ENCODE measurements at regions of chr5 and their contacts with region 1.

Region 1: GRCh38 chr5:82356808-82357671 is 78.9 kb upstream of the RPS23 start:
- DNase-seq: peak; percentile 93
- H3K4me3 Mint-ChIP-seq: peak overlapping the region; percentile 81
- H3K27ac Mint-ChIP-seq: peak overlapping the region; percentile 98
- H3K4me1 Mint-ChIP-seq: peaks cover 71% of the 10 kb centered on the region
- H3K27me3 Mint-ChIP-seq: no peaks in the 10 kb centered on the region

Region 2: GRCh38 chr5:82374637-82375036 is 17.6 kb after region 1 on chr5:
- intact Hi-C with region 1: no loop called
- DNase-seq: no peak
- H3K4me3 Mint-ChIP-seq: no peak overlapping the region
- H3K27ac Mint-ChIP-seq: peak overlapping the region; percentile 52
- H3K4me1 Mint-ChIP-seq: peaks cover 15% of the 10 kb centered on the region
- H3K27me3 Mint-ChIP-seq: no peaks in the 10 kb centered on the region

Region 3: DNA sequence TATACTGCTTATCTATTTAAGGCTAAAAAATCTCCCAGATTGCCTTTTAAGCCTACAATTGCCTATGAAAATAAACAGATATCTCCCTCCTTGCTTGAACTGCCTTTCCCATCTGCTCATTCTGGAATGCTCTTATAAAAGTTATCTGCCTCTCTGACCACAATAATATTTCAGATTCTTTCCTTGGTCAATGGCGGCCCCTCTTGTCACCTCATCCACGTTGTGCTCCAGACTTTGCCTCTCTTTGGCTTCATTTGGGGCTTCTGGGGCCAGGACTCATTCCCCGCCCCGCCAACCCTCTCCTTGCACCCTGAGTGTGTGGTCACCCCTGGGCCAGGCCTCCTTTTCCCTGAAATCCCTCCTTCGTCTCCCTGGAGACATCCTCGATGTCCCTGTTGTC is 31.1 kb after region 1 on chr5:
- intact Hi-C with region 1: loop called (anchors 1 kb)
- DNase-seq: no peak
- H3K4me3 Mint-ChIP-seq: no peak overlapping the region
- H3K27ac Mint-ChIP-seq: peak overlapping the region; percentile 10
- H3K4me1 Mint-ChIP-seq: peaks cover 18% of the 10 kb centered on the region
- H3K27me3 Mint-ChIP-seq: no peaks in the 10 kb centered on the region

Region 4: GRCh38 chr5:82641331-82642003 is 284.4 kb after region 1 on chr5:
- intact Hi-C with region 1: loop called (anchors 2 kb)
- DNase-seq: peak; percentile 77
- H3K4me3 Mint-ChIP-seq: no peak overlapping the region
- H3K27ac Mint-ChIP-seq: no peak overlapping the region
- H3K4me1 Mint-ChIP-seq: peaks cover 12% of the 10 kb centered on the region
- H3K27me3 Mint-ChIP-seq: peaks cover 6% of the 10 kb centered on the region

Region 5: DNA sequence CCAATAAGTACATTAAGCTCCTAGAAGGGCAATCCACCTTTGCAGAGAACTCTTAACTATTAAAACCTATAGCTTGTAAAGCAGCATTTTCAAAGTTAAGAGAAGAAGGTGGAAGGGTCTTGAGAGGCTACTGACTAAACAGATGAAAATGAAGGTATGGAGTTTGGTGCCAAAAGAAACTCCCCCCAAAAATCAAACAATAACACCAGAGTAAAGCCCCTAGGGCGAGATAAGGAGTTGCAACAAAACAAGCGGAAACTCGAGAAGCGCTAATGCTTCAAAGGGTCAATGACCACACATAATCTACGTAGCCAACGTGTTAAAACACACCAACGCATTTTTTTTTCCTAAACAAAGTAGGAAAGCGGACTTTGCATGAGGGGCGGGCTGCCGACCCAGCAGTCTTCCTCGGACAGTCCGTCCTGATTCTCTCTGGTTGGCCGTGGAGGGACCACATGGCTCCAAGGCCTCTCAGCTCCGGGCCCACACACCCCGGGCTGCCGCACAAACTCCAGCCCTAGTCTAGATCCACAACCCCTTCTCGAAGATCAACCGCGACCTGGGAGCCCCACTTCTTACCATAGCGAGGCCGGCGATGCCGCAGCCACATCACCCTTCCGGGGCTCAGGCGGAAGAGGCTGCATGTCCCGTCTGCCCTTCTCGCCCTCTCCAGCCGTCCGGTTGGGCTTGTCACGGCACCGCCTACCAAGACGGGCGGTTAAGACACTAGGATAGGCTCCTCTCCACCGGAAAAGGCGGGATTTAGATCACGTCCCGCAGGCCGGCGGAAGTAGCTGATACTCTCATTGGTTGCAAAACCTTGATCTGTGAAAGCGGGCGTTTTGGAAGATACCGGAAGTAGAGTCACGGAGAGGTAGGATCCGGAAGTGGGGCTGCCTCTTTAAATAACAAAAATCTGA is 720.0 kb after region 1 on chr5 and contains the starts of genes TMEM167A and XRCC4:
- intact Hi-C with region 1: loop called (anchors 1 kb)
- DNase-seq: peak; percentile 98
- H3K4me3 Mint-ChIP-seq: peak within 1 kb of the TSS; percentile 97
- H3K27ac Mint-ChIP-seq: peak within 1 kb of the TSS; percentile 98
- H3K4me1 Mint-ChIP-seq: peaks cover 35% of the 10 kb centered on the region
- H3K27me3 Mint-ChIP-seq: no peaks in the 10 kb centered on the region
- total RNA-seq, gene TMEM167A: 82.0 and 87.4 TPM in 2 replicates
- total RNA-seq, gene XRCC4: 11.4 and 11.6 TPM in 2 replicates